ENCODE measurements at regions of chr5 and their contacts with region 1.

Region 1: GRCh38 chr5:39376293-39376714 is 12.0 kb upstream of the C9 start:
- DNase-seq: peak; percentile 76
- H3K4me3 Mint-ChIP-seq: no peak overlapping the region
- H3K27ac Mint-ChIP-seq: no peak overlapping the region
- H3K4me1 Mint-ChIP-seq: no peaks in the 10 kb centered on the region
- H3K27me3 Mint-ChIP-seq: no peaks in the 10 kb centered on the region
- CTCF ChIP-seq: peak; percentile 70

Region 2: DNA sequence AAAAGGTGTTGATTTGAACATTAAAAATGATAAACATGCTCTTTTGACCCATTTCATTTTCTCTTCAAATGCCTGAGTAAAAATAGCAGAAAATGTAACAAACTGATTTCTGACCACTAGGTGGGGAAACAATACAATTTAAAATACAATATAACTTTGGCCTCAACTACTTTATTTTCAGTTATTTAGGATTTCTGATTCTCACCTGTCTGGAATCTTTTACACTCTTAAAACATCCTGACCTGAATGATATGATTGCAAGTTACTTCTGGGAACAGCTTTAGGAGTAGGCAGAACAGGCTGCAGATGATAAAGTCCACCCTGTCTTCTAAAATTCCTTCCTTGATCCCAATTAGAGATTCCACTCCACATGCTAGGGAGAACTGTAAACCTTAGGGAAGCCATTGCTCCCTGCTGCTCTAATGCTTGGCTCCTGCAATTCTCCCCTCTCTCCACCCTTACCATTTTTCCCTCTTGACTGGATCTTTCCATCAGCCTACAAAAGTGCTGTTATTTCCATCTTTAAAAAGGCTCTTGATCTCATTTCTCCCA is 227.2 kb before region 1 on chr5:
- CTCF ChIA-PET with region 1: no interaction called
- POLR2A ChIA-PET with region 1: no interaction called
- intact Hi-C with region 1: loop called (anchors 2 kb)
- DNase-seq: peak; percentile 29
- H3K4me3 Mint-ChIP-seq: no peak overlapping the region
- H3K27ac Mint-ChIP-seq: no peak overlapping the region
- H3K4me1 Mint-ChIP-seq: no peaks in the 10 kb centered on the region
- H3K27me3 Mint-ChIP-seq: no peaks in the 10 kb centered on the region
- CTCF ChIP-seq: peak; percentile 49

Region 3: DNA sequence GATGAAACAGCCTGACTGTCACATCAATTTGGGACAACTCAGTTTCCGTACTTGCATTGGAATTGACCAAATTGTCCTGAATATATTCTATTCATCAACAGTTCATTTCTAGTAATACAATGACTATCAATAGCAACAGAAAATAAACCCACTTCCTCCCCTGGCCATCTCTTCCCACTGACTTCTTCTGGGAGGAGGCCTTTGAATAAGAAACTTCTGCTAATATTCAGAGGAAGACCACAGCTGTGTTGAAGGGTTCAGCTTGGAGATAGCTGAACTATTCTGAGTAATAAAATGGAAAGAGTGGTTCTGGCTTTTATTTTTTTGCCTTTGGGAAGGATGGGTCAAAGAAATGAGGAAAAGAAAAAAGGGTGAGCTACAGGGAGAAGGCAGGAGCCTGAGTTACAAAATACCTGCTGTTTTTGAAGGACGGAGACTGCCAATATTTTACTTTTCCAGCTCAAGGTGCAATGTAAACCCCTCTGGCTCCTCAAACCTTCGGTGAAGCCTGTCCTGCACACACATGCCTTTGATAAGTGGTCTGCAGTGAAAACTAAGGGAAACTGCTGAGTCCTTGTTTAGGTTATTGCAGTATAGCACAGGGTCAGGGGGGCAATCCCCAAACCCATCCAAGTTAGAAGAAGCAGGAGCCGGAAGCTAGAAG is 186.9 kb before region 1 on chr5:
- CTCF ChIA-PET with region 1: no interaction called
- POLR2A ChIA-PET with region 1: no interaction called
- intact Hi-C with region 1: no loop called
- DNase-seq: no peak
- H3K4me3 Mint-ChIP-seq: no peak overlapping the region
- H3K27ac Mint-ChIP-seq: no peak overlapping the region
- H3K4me1 Mint-ChIP-seq: peaks cover 4% of the 10 kb centered on the region
- H3K27me3 Mint-ChIP-seq: no peaks in the 10 kb centered on the region
- CTCF ChIP-seq: no peak

Region 4: DNA sequence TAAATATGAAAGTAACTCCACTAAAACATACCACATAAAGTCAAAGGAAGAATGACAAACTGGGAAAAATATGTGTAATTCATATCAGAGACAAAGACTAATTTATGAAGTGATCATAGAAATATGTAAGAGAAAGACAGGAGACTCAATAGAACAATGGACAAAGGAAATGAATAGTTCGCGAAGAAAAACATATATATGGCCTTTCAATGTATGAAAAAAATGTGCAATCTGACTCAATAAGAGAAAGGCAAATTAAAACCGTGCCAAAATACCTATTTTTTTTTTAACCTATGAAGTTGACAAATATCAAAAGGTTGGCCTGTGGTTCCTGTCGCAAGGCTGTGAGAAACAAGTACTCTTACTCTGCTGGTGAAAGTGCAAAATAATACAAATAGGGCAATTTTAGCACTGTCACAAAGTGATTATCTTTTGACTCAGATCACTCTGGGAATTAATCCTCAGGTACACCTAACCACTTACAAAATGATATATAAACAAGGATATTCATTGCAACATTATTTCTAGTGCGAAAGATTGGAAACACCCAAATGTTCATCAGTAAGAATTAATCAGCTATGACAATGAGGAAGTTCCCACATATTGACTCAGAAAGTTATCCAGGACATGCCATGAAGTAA is 15.7 kb before region 1 on chr5:
- CTCF ChIA-PET with region 1: interaction called, 16 read pairs
- POLR2A ChIA-PET with region 1: no interaction called
- intact Hi-C with region 1: no loop called
- DNase-seq: peak; percentile 8
- H3K4me3 Mint-ChIP-seq: no peak overlapping the region
- H3K27ac Mint-ChIP-seq: peak overlapping the region; percentile 52
- H3K4me1 Mint-ChIP-seq: peaks cover 8% of the 10 kb centered on the region
- H3K27me3 Mint-ChIP-seq: no peaks in the 10 kb centered on the region
- CTCF ChIP-seq: no peak

Region 5: DNA sequence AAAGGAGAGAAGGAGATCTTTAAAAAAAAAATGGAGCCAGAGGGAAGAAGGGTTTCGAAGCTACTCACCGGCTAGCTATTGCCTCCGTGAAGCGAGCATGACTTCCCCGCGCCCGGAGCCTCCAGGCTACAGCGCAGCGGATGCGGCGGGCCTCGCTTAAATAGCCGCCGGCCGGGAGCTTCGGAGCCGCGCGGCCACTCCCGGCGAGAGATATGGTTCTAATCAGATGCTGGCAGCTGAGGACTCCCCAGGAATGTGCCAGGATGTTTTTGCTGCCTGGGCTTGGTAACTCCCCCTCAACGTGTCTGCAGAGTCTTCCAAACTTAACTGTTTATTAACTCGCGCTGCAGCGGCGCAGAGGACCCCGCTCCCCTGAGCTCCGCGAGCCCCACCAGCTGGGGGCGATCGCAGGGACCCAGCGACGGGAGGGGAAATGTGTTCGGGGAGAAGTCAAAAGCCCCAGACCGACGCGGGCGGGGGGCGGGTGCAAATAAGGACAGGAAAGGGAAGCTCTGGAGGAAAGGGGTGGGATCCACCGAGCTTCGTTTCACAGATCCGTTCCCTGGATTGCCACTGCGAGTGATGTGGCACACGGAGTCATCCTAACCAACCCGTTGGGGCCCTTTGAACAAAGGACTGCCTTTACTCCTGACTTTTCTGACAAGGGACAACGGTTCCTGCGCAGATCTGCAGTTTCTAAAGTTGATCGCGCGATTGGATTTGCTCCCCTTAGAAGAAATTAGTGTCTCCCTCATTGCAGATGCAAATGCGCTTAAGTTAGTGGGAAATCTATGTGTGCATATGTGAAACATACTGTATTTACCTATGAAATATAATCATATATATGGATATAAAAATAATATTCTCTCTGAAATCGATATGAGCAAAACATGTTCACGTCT is 48.7 kb after region 1 on chr5 and contains the start of gene DAB2:
- CTCF ChIA-PET with region 1: interaction called, 13 read pairs
- POLR2A ChIA-PET with region 1: no interaction called
- intact Hi-C with region 1: loop called (anchors 2 kb)
- DNase-seq: peak; percentile 62
- H3K4me3 Mint-ChIP-seq: peak within 1 kb of the TSS; percentile 81
- H3K27ac Mint-ChIP-seq: no peak within 1 kb of the TSS
- H3K4me1 Mint-ChIP-seq: peaks cover 5% of the 10 kb centered on the region
- H3K27me3 Mint-ChIP-seq: peaks cover 18% of the 10 kb centered on the region
- CTCF ChIP-seq: peak; percentile 23
- total RNA-seq, gene DAB2: 0.68 and 2.1 TPM in 2 replicates

Region 6: GRCh38 chr5:39475881-39476842 is 99.9 kb after region 1 on chr5:
- CTCF ChIA-PET with region 1: interaction called, 10 read pairs
- POLR2A ChIA-PET with region 1: no interaction called
- intact Hi-C with region 1: no loop called
- DNase-seq: no peak
- H3K4me3 Mint-ChIP-seq: no peak overlapping the region
- H3K27ac Mint-ChIP-seq: no peak overlapping the region
- H3K4me1 Mint-ChIP-seq: no peaks in the 10 kb centered on the region
- H3K27me3 Mint-ChIP-seq: no peaks in the 10 kb centered on the region
- CTCF ChIP-seq: no peak

Region 7: DNA sequence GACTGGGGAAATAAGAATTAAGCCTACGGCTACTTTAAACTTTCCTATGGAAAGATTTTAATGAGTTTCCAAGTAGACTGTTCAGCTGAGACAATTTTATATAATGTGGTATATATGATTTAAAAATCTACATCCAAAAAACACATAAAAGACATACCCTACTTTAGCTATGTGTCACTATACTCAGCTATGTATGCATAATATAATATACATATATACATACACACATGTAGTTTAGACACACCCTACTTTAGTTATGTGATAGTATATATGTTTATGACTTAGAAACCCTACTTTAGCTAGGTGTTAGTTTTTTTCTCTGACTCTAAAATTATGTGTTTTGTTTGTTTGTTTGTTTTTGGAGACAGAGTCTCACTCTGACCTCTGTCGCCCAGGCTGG is 149.0 kb after region 1 on chr5:
- CTCF ChIA-PET with region 1: interaction called, 14 read pairs
- POLR2A ChIA-PET with region 1: no interaction called
- intact Hi-C with region 1: no loop called
- DNase-seq: no peak
- H3K4me3 Mint-ChIP-seq: no peak overlapping the region
- H3K27ac Mint-ChIP-seq: no peak overlapping the region
- H3K4me1 Mint-ChIP-seq: no peaks in the 10 kb centered on the region
- H3K27me3 Mint-ChIP-seq: no peaks in the 10 kb centered on the region
- CTCF ChIP-seq: no peak

Region 8: DNA sequence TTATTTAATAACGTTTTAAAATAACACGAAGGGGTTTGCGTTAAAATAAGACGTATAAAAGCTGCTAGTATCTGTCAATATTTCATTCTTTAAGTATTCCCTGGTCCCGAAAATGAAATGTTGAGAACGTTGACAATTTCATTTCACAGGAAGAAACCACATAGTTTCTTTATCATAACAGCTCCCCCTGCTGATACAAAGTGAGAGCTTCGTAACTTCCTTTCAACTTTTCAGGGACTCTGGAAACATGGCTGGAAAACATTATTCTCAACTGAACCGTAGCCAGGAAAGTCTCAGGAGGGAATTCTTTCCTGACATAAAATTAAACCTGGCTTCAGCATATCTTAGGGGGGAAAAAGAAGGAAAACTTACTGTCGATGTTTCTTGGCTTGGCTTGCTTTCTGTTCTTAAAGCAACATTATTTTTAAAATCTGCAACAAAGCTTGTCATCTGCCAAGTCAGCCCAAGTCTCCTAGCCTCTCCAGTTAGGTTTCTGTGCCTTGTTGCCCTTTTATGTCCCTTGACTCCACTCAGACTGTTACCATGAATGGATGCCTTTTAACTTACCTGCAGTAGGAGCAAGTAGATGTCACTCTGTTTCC is 171.3 kb after region 1 on chr5:
- CTCF ChIA-PET with region 1: interaction called, 355 read pairs
- POLR2A ChIA-PET with region 1: interaction called, 25 read pairs
- intact Hi-C with region 1: loop called (anchors 1 kb)
- DNase-seq: peak; percentile 73
- H3K4me3 Mint-ChIP-seq: no peak overlapping the region
- H3K27ac Mint-ChIP-seq: no peak overlapping the region
- H3K4me1 Mint-ChIP-seq: no peaks in the 10 kb centered on the region
- H3K27me3 Mint-ChIP-seq: no peaks in the 10 kb centered on the region
- CTCF ChIP-seq: peak; percentile 65

Measured in MCF 10A (cell line).